ENCODE measurements at regions of chr5 and their contacts with region 1.

Region 1: GRCh38 chr5:108315829-108316228 is 66.1 kb downstream of the FBXL17 start:
- DNase-seq: no peak
- H3K4me3 Mint-ChIP-seq: no peak overlapping the region
- H3K27ac Mint-ChIP-seq: no peak overlapping the region
- H3K4me1 Mint-ChIP-seq: no peaks in the 10 kb centered on the region
- H3K27me3 Mint-ChIP-seq: no peaks in the 10 kb centered on the region

Region 2: DNA sequence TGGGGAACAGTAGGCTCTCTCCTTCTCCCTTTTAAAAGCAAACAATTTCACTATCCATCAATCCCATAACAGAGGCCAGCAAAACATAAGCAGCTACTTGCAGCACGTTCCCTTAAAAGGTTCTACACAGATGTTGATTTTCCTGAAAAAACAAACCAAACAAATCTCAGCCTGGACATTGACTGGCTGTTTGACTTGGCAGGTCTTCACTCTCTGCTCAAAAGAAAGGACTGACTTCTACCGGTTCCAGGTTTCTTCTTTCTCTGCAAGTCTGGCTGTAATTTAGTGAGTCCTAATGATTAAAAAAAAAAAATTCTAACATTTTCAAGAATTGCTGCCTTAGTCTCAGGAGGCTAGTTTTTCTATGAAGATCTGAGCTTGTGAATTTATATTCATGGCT is 442.0 kb before region 1 on chr5:
- CTCF ChIA-PET with region 1: no interaction called
- POLR2A ChIA-PET with region 1: interaction called, 12 read pairs
- DNase-seq: no peak
- H3K4me3 Mint-ChIP-seq: no peak overlapping the region
- H3K27ac Mint-ChIP-seq: no peak overlapping the region
- H3K4me1 Mint-ChIP-seq: peaks cover 4% of the 10 kb centered on the region
- H3K27me3 Mint-ChIP-seq: no peaks in the 10 kb centered on the region

Region 3: GRCh38 chr5:108280960-108281569 is 34.8 kb before region 1 on chr5:
- CTCF ChIA-PET with region 1: no interaction called
- POLR2A ChIA-PET with region 1: no interaction called
- DNase-seq: no peak
- H3K4me3 Mint-ChIP-seq: no peak overlapping the region
- H3K27ac Mint-ChIP-seq: no peak overlapping the region
- H3K4me1 Mint-ChIP-seq: peaks cover 5% of the 10 kb centered on the region
- H3K27me3 Mint-ChIP-seq: no peaks in the 10 kb centered on the region